Activated B cell treated with CpG ODN at 0.5 μM for 24 hours (primary cell): ENCODE measurements at regions of chr7 and their contacts with region 1.

Region 1: GRCh38 chr7:17298207-17298839 is at the start of gene AHR:
- DNase-seq: no peak
- ATAC-seq: peak; percentile 80
- H3K4me3 Mint-ChIP-seq: peak within 1 kb of the TSS; percentile 86
- H3K27ac Mint-ChIP-seq: peak within 1 kb of the TSS; percentile 86
- H3K4me1 Mint-ChIP-seq: peaks cover 38% of the 10 kb centered on the region
- H3K27me3 Mint-ChIP-seq: no peaks in the 10 kb centered on the region
- CTCF ChIP-seq: no peak
- total RNA-seq, gene AHR: 21.4 and 24.4 TPM in 2 replicates

Region 2: DNA sequence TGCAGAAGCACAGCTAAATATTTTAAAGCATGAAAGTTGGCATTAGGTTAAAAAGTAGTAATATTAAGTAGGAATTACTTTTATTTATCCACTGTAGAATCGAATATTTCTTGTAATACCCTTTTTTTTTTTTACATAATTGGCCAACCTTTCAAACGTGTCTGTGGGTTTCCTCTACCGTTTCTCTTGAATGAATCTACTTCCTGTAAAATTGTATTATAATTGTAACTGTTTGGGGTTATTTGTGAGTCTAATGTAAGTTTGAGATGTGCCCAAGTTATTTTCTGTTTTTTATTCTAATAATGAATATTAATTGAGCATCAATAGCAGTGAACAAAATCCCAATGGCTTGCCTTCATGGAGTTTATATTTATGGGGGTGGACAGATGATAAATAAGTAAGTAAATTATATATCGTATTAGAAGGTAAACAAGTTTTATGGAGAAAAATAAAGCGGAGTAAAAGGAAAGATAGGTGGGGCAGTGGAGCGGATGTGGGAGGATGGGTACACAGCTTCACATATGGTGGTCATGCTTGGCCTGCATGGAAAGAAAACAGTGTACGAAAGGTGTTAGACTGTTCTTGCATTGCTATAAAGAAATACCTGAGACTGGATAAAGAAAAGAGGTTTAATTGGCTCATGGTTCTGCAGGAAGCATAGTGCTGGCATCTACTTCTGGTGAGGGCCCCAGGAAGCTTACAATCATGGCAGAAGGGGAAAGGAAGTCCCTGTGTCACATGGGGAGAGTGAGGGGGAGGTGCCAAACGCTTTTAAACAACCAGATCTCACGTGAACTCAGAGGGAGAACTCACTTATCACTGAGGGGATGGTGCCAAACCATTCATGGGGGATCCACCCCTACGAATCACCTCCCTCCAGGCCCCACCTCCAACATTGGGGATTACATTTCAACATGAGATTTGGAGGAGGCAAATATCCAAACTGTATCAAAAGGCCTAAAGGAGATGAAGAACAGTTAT is 539.4 kb before region 1 on chr7:
- CTCF ChIA-PET with region 1: no interaction called
- POLR2A ChIA-PET with region 1: interaction called, 6 read pairs
- intact Hi-C with region 1: loop called (anchors 2 kb)
- DNase-seq: no peak
- ATAC-seq: peak; percentile 40
- H3K4me3 Mint-ChIP-seq: peak overlapping the region; percentile 75
- H3K27ac Mint-ChIP-seq: peak overlapping the region; percentile 92
- H3K4me1 Mint-ChIP-seq: peaks cover 93% of the 10 kb centered on the region
- H3K27me3 Mint-ChIP-seq: no peaks in the 10 kb centered on the region
- CTCF ChIP-seq: no peak

Region 3: GRCh38 chr7:17009007-17009719 is 289.2 kb before region 1 on chr7:
- CTCF ChIA-PET with region 1: interaction called, 21 read pairs
- POLR2A ChIA-PET with region 1: no interaction called
- intact Hi-C with region 1: loop called (anchors 1 kb)
- DNase-seq: no peak
- ATAC-seq: no peak
- H3K4me3 Mint-ChIP-seq: no peak overlapping the region
- H3K27ac Mint-ChIP-seq: no peak overlapping the region
- H3K4me1 Mint-ChIP-seq: peaks cover 6% of the 10 kb centered on the region
- H3K27me3 Mint-ChIP-seq: peaks cover 3% of the 10 kb centered on the region
- CTCF ChIP-seq: peak; percentile 29

Region 4: GRCh38 chr7:17255926-17256325 is 42.4 kb before region 1 on chr7:
- CTCF ChIA-PET with region 1: no interaction called
- POLR2A ChIA-PET with region 1: no interaction called
- intact Hi-C with region 1: loop called (anchors 1 kb)
- DNase-seq: no peak
- ATAC-seq: no peak
- H3K4me3 Mint-ChIP-seq: no peak overlapping the region
- H3K27ac Mint-ChIP-seq: no peak overlapping the region
- H3K4me1 Mint-ChIP-seq: no peaks in the 10 kb centered on the region
- H3K27me3 Mint-ChIP-seq: no peaks in the 10 kb centered on the region
- CTCF ChIP-seq: no peak

Region 5: DNA sequence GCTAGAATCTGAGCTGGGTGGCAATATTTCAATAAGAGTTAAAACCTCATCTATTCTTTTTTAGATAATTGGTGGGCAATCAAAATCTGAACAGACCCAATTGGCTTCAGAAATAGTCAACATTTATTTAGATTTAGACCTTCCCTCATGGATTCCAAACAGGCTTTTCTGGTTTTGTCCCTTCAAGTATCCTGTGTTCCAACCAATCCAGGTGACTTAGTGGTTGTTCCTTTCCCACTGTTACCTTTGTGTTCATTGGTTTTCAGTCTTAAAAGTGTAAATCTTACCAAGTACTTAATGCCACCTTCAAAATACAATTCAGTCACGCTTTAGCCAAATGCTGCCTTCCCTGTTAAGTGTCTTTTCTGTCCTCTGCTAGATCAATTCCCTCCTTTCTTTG is 86.1 kb after region 1 on chr7:
- CTCF ChIA-PET with region 1: no interaction called
- POLR2A ChIA-PET with region 1: no interaction called
- intact Hi-C with region 1: no loop called
- DNase-seq: no peak
- ATAC-seq: no peak
- H3K4me3 Mint-ChIP-seq: no peak overlapping the region
- H3K27ac Mint-ChIP-seq: no peak overlapping the region
- H3K4me1 Mint-ChIP-seq: no peaks in the 10 kb centered on the region
- H3K27me3 Mint-ChIP-seq: no peaks in the 10 kb centered on the region
- CTCF ChIP-seq: no peak

Region 6: GRCh38 chr7:17408904-17409290 is 110.6 kb after region 1 on chr7:
- CTCF ChIA-PET with region 1: no interaction called
- POLR2A ChIA-PET with region 1: no interaction called
- intact Hi-C with region 1: no loop called
- DNase-seq: no peak
- ATAC-seq: no peak
- H3K4me3 Mint-ChIP-seq: no peak overlapping the region
- H3K27ac Mint-ChIP-seq: no peak overlapping the region
- H3K4me1 Mint-ChIP-seq: no peaks in the 10 kb centered on the region
- H3K27me3 Mint-ChIP-seq: no peaks in the 10 kb centered on the region
- CTCF ChIP-seq: no peak

Region 7: DNA sequence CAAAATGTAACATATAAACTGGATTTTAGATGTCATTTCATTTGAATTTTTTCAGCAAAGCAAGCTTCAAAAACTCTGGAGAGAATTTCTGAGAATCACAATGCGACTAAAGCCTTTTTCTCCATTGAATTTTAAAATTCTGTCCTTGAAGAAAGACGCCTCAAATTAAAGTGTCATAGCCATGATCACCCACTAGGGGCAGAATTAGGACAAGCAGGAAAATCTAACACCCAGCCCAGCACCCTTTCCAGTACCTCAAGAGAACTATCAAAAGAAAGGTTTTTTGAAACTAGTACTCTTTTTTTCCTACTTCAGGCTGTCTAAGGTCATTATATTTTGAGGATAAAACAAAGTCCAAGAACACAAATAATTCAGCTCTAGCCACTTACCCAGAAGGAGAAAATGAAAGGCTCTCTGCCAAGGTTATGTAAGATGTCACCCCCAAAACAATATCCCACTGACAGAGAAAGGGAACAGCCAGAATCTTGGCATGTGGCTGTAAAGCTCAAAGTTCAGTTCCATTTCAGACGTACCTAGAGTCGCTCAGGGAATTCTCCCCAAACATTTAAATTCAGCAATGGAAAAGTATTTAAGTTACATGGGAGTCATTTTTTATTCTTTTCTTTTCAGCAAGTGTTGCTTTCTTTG is 342.5 kb after region 1 on chr7:
- CTCF ChIA-PET with region 1: interaction called, 3 read pairs
- POLR2A ChIA-PET with region 1: no interaction called
- intact Hi-C with region 1: loop called (anchors 5 kb)
- DNase-seq: no peak
- ATAC-seq: no peak
- H3K4me3 Mint-ChIP-seq: no peak overlapping the region
- H3K27ac Mint-ChIP-seq: no peak overlapping the region
- H3K4me1 Mint-ChIP-seq: no peaks in the 10 kb centered on the region
- H3K27me3 Mint-ChIP-seq: no peaks in the 10 kb centered on the region
- CTCF ChIP-seq: peak; percentile 71

Region 8: DNA sequence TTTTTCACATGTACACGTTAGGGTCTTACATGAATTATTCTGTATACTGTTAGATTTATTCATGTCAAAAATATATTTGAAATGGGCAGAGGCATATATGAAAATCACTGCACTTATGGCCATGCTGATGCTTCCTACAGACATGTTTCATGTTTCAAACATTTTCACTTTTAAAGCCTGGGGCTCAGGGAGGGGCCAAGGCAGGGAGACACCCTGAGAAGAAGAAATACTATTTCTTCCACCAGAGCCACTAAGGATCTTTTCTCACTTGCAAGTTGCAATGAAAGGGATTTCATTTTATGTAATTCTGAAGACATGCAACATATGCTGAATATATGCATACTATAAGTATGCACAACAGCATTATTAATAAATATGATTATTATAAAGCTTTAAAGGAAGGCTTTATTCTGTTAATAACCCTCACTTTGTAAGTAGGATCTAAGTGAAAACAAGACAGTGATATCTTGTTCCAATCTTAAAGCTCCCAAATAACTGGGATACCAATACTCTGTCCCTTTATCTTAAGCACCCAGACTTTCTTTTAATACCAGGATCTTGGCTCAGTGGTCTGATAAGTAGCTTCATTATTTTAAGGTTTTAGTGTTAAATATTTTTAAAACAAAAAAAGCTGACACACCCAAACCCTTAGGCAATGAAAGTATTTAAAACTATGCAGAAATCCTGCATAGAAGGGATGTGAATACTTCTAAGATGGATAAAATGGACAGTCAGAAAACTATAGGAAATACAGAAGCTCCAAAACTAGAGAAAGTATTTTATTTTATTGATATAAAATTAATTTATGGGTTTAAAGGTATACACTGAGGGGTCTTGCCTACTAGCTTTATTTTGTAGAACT is 494.0 kb after region 1 on chr7:
- CTCF ChIA-PET with region 1: no interaction called
- POLR2A ChIA-PET with region 1: no interaction called
- intact Hi-C with region 1: no loop called
- DNase-seq: no peak
- ATAC-seq: no peak
- H3K4me3 Mint-ChIP-seq: no peak overlapping the region
- H3K27ac Mint-ChIP-seq: no peak overlapping the region
- H3K4me1 Mint-ChIP-seq: no peaks in the 10 kb centered on the region
- H3K27me3 Mint-ChIP-seq: no peaks in the 10 kb centered on the region
- CTCF ChIP-seq: no peak

Region 9: GRCh38 chr7:18508443-18509427 is 1210.4 kb after region 1 on chr7:
- CTCF ChIA-PET with region 1: no interaction called
- POLR2A ChIA-PET with region 1: no interaction called
- intact Hi-C with region 1: loop called (anchors 10 kb)
- DNase-seq: no peak
- ATAC-seq: peak; percentile 74
- H3K4me3 Mint-ChIP-seq: peak overlapping the region; percentile 82
- H3K27ac Mint-ChIP-seq: peak overlapping the region; percentile 99
- H3K4me1 Mint-ChIP-seq: peaks cover 89% of the 10 kb centered on the region
- H3K27me3 Mint-ChIP-seq: no peaks in the 10 kb centered on the region
- CTCF ChIP-seq: no peak